CD4-positive, alpha-beta T cell (primary cell): ENCODE measurements at regions of chr11 and their contacts with region 1.

Region 1: GRCh38 chr11:1326435-1327063 is 17.1 kb upstream of the TOLLIP start:
- DNase-seq: no peak
- ATAC-seq: no peak
- H3K4me3 ChIP-seq: no peak overlapping the region
- H3K4me3 Mint-ChIP-seq: no peak overlapping the region
- H3K27ac ChIP-seq: no peak overlapping the region
- H3K27ac Mint-ChIP-seq: no peak overlapping the region
- H3K4me1 ChIP-seq: no peaks in the 10 kb centered on the region
- H3K4me1 Mint-ChIP-seq: no peaks in the 10 kb centered on the region
- H3K27me3 ChIP-seq: no peaks in the 10 kb centered on the region
- H3K27me3 Mint-ChIP-seq: peaks cover 23% of the 10 kb centered on the region
- CTCF ChIP-seq: no peak

Region 2: GRCh38 chr11:1298695-1299492 is 27.7 kb before region 1 on chr11:
- CTCF ChIA-PET with region 1: no interaction called
- POLR2A ChIA-PET with region 1: no interaction called
- intact Hi-C with region 1: loop called in 1 of 2 experiments (anchors 1 kb)
- DNase-seq: peak in 2 of 14 experiments; percentile 19 to 39
- ATAC-seq: no peak
- H3K4me3 ChIP-seq: no peak overlapping the region
- H3K4me3 Mint-ChIP-seq: no peak overlapping the region
- H3K27ac ChIP-seq: no peak overlapping the region
- H3K27ac Mint-ChIP-seq: no peak overlapping the region
- H3K4me1 ChIP-seq: peaks cover 14% of the 10 kb centered on the region
- H3K4me1 Mint-ChIP-seq: peaks cover 10% of the 10 kb centered on the region
- H3K27me3 ChIP-seq: no peaks in the 10 kb centered on the region
- H3K27me3 Mint-ChIP-seq: no peaks in the 10 kb centered on the region
- CTCF ChIP-seq: no peak

Region 3: DNA sequence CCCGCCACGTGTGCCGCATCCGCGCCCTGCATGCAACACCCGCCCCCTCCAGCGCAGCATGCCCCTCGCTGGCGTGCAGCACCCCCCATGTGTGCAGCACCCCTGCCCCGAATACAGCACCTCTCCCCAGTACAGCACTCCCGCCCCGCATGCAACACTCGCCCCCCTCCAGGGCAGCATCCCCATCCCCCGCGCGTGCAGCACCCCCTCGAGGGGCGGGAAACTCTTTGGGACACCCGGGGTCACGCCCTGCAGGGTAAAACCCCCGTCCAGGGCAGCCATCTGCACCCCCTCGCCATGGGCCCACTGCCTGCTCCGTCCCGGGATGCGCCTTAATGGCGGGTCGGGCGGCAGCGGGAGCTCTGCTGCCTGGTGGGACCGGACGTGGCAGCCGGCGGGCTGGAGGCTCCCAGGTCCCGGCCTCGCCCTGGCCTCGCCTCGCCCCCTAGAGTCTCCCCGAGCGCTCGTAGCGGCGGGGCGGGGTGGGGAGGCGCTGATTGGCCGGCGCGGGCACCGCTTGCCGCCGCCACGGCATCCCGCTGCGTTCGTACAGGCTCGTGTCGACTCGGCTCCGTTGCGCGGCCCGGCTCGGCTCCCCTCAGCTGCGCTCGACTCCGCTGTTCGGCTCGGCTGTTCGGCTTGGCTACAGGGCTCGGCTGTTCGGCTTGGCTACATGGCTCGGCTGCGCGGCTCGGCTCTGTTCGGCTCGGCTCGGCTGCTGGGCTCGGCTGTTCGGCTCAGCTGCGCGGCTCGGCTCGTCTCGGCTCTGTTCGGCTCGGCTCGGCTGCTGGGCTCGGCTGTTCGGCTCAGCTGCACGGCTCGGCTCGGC is 62.8 kb after region 1 on chr11:
- CTCF ChIA-PET with region 1: no interaction called
- POLR2A ChIA-PET with region 1: no interaction called
- intact Hi-C with region 1: no loop called
- DNase-seq: peak; percentile 96 to 99 (median 97)
- ATAC-seq: peak; percentile 95
- H3K4me3 ChIP-seq: peak overlapping the region; percentile 67
- H3K4me3 Mint-ChIP-seq: peak overlapping the region; percentile 68
- H3K27ac ChIP-seq: no peak overlapping the region
- H3K27ac Mint-ChIP-seq: no peak overlapping the region
- H3K4me1 ChIP-seq: peaks cover 22% of the 10 kb centered on the region
- H3K4me1 Mint-ChIP-seq: peaks cover 7% of the 10 kb centered on the region
- H3K27me3 ChIP-seq: peaks cover 20 to 24% of the 10 kb centered on the region in 2 experiments
- H3K27me3 Mint-ChIP-seq: peaks cover 28% of the 10 kb centered on the region
- CTCF ChIP-seq: peak; percentile 19

Region 4: DNA sequence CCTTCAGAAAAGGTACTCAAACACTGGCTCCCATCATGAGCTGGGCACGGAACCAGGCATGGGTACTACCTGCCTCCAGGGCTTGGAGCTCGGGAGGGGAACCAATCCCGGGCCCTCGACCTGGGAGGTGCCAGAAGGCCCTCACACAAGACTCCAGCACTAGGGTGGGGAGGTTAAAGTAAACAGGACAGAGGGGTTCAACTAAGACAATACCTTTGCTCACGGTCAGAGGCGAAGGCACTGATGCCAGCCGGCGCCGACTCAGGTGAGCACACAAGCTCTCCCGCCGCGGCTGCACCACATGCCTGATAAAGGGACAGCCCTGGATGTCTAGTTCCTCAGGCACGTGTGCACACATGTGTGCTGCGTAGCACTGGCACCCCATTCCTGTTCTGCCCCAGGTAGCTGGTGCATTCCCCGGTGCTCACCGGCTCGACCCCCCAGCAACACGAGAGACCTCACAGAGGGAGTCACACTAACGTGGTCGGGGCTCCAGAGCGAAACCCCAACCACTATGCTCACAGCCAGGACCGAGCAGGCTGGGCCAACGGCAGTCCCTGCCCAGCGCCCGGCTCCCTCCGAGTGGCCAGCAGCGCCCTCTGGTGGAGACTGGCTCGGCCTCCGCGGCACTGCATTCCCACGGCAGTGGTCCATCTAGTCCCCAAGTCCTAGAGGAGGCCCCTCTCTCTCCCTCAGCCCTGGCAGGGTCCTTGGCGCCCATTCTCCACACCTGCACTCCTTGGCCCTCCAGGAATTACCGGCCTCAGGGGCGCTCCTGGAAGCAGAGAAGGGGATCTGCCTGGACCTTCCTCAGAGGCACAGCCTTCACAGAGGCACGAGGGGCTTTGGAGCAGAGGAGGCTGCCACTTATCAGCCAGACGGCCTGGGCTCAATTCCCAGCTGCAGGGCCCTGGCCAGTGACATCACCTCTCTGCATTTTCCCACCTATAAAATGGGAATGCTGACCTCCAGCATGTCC is 188.8 kb after region 1 on chr11:
- CTCF ChIA-PET with region 1: no interaction called
- POLR2A ChIA-PET with region 1: no interaction called
- intact Hi-C with region 1: no loop called
- DNase-seq: peak; percentile 55 to 83 (median 68)
- ATAC-seq: peak; percentile 80
- H3K4me3 ChIP-seq: no peak overlapping the region
- H3K4me3 Mint-ChIP-seq: peak overlapping the region; percentile 42
- H3K27ac ChIP-seq: no peak overlapping the region
- H3K27ac Mint-ChIP-seq: peak overlapping the region; percentile 29
- H3K4me1 ChIP-seq: peaks cover 70% of the 10 kb centered on the region
- H3K4me1 Mint-ChIP-seq: peaks cover 66% of the 10 kb centered on the region
- H3K27me3 ChIP-seq: no peaks in the 10 kb centered on the region
- H3K27me3 Mint-ChIP-seq: no peaks in the 10 kb centered on the region
- CTCF ChIP-seq: peak; percentile 84

Region 5: GRCh38 chr11:1546536-1547400 is 220.2 kb after region 1 on chr11:
- CTCF ChIA-PET with region 1: no interaction called
- POLR2A ChIA-PET with region 1: no interaction called
- intact Hi-C with region 1: no loop called
- DNase-seq: peak in 11 of 14 experiments; percentile 27 to 79 (median 45)
- ATAC-seq: peak; percentile 80
- H3K4me3 ChIP-seq: no peak overlapping the region
- H3K4me3 Mint-ChIP-seq: no peak overlapping the region
- H3K27ac ChIP-seq: no peak overlapping the region
- H3K27ac Mint-ChIP-seq: no peak overlapping the region
- H3K4me1 ChIP-seq: peaks cover 26% of the 10 kb centered on the region
- H3K4me1 Mint-ChIP-seq: peaks cover 4% of the 10 kb centered on the region
- H3K27me3 ChIP-seq: peaks cover 26 to 47% of the 10 kb centered on the region in 2 experiments
- H3K27me3 Mint-ChIP-seq: peaks cover 44% of the 10 kb centered on the region
- CTCF ChIP-seq: peak; percentile 70

Region 6: DNA sequence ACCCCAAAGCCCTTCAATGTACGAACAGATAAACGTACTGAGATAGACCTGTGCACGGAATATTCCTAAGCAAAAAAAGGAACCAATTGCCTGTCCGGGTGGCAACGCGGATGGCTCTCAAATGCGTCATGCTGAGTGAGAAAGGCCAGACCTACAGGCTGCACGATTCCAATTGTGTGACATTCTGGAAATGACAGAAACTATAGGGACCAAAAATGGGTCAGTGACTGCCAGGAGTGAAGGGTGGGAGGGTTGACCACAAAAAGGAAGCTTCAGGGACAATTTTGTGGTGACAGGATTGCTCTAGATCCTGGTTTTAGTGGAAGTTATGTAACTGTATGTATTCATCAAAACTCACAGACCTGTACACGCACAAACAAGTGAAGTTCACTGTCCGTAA is 484.2 kb after region 1 on chr11:
- CTCF ChIA-PET with region 1: no interaction called
- POLR2A ChIA-PET with region 1: no interaction called
- intact Hi-C with region 1: no loop called
- DNase-seq: peak in 2 of 14 experiments; percentile 35 to 55
- ATAC-seq: no peak
- H3K4me3 ChIP-seq: no peak overlapping the region
- H3K4me3 Mint-ChIP-seq: no peak overlapping the region
- H3K27ac ChIP-seq: no peak overlapping the region
- H3K27ac Mint-ChIP-seq: no peak overlapping the region
- H3K4me1 ChIP-seq: no peaks in the 10 kb centered on the region
- H3K4me1 Mint-ChIP-seq: no peaks in the 10 kb centered on the region
- H3K27me3 ChIP-seq: peaks cover 0 to under 1% of the 10 kb centered on the region in 2 experiments
- H3K27me3 Mint-ChIP-seq: peaks cover 15% of the 10 kb centered on the region
- CTCF ChIP-seq: no peak